ENCODE measurements at regions of chr17 and their contacts with region 1.

Region 1: DNA sequence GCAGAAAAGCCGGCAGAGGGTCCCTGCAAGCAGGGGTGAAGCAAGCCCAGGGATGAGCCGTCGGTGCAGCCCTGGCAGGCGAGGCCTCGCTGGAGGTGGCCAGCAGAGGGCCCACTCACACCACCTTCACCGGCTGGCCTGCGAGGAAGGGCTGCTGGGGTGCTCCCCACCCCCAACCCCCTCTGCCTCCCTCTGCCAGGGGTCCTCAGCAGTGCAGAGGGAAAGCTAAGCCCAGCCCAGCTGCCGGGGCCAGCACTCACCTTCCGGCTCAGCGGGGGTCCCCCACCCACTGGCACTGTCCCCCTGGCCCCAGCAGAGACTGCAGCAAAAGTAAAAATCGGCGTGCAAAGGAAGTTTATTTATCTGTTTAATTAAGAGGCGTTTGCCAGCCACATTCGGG is 113.4 kb downstream of the ENGASE start:
- DNase-seq: peak; percentile 71

Region 2: DNA sequence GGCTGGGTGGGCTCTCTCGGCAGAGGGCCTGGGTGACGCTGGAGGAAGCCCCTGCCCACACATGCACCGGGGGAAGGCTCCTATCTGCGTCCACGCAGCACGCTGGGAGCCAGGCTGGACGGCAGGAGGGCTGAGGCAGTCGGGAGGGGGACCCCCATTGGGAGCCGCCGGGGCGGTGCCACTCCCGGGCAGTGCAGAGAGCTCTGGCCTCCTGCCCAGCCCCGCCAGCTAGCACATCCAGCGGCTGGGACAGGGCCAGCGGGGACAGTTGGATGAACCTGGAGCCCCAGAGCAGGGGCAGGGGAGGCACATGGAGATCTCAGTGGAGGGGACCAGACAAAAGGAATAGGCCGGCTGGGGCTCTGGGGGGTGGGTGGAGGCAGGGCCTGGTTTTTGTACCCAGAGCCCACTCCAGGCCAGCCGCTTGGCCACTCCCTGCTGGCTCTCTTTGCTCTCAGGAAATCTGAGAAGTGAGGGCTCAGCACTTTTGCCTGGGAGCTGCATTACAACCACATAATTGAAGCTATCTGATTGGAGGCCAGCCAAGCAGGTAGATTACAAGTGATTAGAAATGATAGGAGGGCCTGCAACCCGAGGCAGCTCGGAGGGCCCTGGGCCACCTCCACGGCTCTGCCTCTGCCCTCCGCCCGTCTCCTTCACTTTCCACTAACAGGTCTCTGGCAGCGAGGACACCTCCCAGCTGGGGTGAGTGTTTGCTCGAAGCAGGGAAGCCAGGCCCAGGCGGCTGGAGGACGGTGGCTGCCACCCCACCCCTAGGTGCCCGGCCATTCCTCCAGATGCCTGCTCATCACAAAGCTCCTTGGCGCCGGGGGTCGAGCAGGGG is 73.4 kb before region 1 on chr17:
- in situ Hi-C with region 1: loop called (anchors 5 kb)
- DNase-seq: no peak

Region 3: DNA sequence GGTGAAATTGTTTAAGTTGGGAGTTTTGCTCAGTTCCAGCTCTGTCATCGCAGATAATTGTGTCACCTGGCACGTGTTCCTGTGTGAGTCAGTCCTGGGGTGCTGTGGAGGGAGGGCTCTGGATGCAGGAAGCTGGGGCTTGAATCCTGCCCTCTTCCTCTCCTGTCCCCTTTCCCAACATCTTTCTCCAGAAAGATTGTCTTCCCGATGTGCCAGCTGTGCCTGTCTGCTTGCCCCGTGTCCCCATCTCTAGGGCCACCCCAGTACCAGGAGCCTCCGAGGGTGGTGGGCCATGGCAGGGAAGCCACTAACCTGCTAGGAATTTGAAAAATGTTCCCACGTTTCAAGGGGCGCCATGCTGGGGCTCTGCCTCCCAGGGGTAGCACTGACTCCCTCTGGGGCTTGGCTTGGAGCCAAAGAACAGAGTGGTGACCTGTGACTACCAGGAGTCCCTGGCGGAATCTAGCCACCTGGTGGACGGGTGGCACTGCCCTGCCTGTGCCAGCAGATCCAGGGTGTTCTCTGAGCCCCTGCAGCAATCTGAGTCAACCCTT is 84.7 kb after region 1 on chr17:
- in situ Hi-C with region 1: no loop called
- DNase-seq: no peak

Region 4: DNA sequence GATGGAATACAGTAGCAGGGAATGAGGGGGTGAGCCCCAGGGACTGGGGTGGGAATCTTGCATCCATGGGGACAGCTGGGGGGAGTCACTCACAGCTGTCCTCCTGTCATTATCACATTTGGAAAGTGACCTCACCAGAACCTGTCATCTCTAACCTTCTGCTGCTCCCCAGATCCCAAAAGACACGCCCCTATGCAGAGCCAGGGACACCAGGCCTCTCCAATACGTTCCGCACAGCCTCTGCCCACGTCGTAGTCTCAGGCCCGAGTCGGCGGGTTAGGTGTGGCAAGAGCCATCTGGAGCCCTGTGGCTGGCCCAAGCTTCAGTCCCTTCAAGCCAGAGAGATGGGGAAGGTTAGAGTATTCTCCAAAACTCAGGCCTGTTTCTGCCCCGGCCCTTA is 100.9 kb after region 1 on chr17:
- in situ Hi-C with region 1: no loop called
- DNase-seq: no peak

Region 5: DNA sequence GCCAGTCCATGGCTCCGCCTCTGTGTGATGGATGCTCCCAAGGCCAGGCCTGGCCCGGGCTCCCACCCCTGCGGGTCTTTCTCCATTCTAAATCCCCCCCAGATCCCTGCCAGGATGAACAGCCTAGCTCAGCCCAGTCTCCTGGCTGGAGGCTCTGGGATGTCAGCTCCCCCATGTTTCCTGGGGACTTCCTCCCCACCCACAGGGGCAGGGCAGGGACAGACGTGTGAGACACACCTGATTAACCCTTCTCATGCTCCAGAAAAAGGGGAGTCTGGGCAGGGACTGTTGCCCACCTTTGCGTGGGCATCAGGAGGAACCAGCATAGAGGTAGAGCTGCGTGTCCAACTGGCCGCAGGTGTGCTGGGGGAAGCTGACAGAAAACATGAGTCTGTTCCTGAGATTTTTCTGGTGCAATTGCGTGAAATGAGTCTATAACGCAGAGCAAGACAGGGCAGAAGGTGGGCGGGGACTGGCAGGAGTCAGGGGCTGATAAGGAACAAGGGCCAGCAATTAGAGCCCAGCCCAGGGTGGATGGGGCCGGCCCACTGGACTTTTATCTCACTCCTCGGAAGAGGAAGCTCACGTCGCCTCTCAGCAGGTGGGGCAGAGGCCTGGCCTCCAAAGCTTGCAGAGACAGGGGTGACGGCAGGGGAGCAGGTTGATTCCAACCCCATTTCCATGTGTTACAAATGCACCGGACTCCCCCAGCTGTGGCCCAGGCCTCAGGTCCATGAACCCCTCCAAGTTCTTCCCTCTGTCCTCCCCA is 184.6 kb after region 1 on chr17:
- in situ Hi-C with region 1: loop called (anchors 10 kb)
- DNase-seq: no peak

Region 6: DNA sequence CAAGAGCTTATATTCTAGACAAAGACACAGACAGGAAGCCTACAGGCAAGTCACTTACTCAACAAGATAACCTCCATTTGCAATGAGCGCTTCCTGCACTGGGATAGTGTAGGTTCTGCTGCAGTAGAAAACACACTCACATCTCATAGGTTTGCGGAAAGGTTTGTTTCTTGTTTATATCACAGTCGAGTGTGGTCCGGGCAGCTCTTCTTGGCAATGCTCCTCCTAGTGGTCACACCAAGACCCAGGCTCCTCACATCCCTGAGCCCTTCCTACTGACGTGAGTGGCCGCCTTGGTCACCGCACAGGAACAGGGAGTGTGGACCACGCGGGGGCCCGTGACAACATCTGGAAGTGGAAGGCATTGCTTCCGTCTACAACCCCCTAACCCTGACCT is 470.8 kb after region 1 on chr17:
- in situ Hi-C with region 1: loop called (anchors 25 kb)
- DNase-seq: peak; percentile 80